Upper lobe of right lung (tissue), 1 donor: ENCODE measurements at regions of chr2 and their contacts with region 1.

Region 1: DNA sequence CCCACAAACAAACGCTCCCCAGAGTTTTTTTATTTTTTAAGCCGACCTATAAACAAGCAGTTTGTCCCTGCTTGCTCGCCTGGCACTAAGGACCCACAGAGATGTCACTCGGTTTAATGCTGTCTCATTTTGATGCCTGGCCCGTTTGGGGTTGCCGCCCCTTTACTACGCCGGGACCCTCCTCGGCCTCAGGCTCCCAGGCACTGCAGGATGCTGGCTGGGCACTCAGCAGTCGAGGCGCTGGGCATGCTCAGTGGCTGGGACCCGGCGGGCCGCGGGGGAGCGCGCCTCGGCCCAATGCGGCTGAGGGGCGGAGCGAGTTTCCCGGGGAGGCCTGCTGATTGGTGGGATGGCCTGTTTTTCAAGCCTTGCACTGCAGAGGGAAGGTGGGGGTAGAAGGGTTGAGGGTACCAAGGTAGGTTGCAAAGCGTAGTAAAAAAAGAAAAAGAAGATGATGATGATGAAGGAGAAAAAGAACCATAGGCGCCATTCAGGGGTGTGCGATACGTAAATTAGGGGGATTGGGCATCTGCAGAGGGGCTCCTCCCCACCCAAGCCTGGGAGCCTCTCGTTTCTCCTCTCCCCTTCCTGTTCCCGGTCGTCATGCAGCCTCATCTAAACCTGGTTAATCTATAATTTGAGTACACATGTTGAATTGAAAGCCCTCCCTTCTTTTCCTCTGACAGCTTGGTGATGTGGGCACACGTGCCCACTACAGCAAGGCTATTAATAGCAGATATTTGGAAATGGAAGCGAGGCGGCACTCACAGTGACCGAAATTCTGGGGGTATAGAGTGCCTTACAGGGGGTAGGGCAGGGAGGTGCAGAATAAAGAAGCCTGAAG is 1.5 kb upstream of the IRS1 start:
- DNase-seq: peak; percentile 92
- ATAC-seq: peak; percentile 83
- H3K4me3 ChIP-seq: peak overlapping the region; percentile 70
- H3K27ac ChIP-seq: peak overlapping the region; percentile 77
- H3K4me1 ChIP-seq: peaks cover 21% of the 10 kb centered on the region
- H3K27me3 ChIP-seq: no peaks in the 10 kb centered on the region
- CTCF ChIP-seq: no peak

Region 2: GRCh38 chr2:225894240-225894980 is 906.8 kb before region 1 on chr2:
- intact Hi-C with region 1: loop called (anchors 10 kb)
- DNase-seq: no peak
- ATAC-seq: no peak
- H3K4me3 ChIP-seq: no peak overlapping the region
- H3K27ac ChIP-seq: no peak overlapping the region
- H3K4me1 ChIP-seq: no peaks in the 10 kb centered on the region
- H3K27me3 ChIP-seq: no peaks in the 10 kb centered on the region
- CTCF ChIP-seq: no peak